ENCODE measurements at regions of chr5 and their contacts with region 1.

Region 1: GRCh38 chr5:78537821-78538220 is 110.8 kb downstream of the LHFPL2 start:
- DNase-seq: peak; percentile 61
- H3K4me3 ChIP-seq: no peak overlapping the region
- H3K27ac ChIP-seq: no peak overlapping the region
- H3K4me1 ChIP-seq: peaks cover 3% of the 10 kb centered on the region
- H3K27me3 ChIP-seq: no peaks in the 10 kb centered on the region
- CTCF ChIP-seq: peak; percentile 38
- POLR2A ChIP-seq: no peak

Region 2: GRCh38 chr5:78483809-78484521 is 53.9 kb before region 1 on chr5:
- CTCF ChIA-PET with region 1: interaction called, 18 read pairs
- POLR2A ChIA-PET with region 1: no interaction called
- dilution Hi-C with region 1: no loop called
- intact Hi-C with region 1: no loop called
- DNase-seq: peak; percentile 80
- H3K4me3 ChIP-seq: no peak overlapping the region
- H3K27ac ChIP-seq: no peak overlapping the region
- H3K4me1 ChIP-seq: peaks cover 14% of the 10 kb centered on the region
- H3K27me3 ChIP-seq: no peaks in the 10 kb centered on the region
- CTCF ChIP-seq: no peak
- POLR2A ChIP-seq: no peak

Region 3: DNA sequence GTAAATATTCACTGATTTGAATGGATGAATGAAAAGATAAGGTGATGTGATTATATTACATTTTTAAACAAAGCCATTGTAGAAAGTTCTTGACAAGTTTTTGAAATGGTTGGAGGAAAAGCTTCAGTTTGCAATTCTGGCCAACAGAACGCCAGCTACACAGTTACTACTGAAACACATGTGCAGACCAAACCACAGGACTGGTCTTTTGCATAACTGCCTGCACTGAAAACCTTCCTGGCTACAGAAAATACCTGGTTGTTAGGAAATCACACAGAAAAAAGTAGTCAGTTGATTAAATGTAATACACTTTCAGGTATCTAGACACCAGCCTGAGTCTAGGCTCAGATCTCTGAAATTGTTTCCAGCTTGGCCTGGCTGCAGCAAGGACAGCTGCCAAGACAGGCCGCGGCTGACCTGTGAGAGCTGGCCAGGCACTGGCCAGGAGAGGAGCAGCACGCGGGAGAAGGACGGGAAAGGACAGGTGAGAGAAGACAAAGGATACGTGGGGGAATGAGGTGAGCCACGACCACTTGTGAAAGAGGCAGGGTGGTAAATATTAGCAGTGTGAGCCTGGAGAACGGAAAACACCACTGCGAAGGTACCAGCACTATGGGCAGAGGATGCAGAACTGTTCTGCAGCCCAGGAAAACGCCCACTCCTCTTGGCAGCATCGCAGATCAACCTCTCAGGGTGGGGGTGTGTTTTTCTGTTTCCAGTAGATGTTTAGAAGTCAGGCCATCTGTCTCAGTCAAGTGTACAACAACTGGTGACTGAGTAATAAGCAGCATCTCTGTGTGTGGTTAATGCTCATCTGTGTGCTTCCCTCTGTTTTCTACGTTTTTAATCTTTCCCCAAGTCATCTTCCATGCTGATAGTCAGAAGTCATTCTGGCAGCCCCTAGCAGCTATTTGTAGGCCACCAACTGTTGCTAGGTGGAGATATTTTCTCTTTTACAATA is 40.0 kb before region 1 on chr5:
- CTCF ChIA-PET with region 1: interaction called, 16 read pairs
- POLR2A ChIA-PET with region 1: no interaction called
- dilution Hi-C with region 1: no loop called
- intact Hi-C with region 1: no loop called
- DNase-seq: no peak
- H3K4me3 ChIP-seq: no peak overlapping the region
- H3K27ac ChIP-seq: no peak overlapping the region
- H3K4me1 ChIP-seq: peaks cover 16% of the 10 kb centered on the region
- H3K27me3 ChIP-seq: no peaks in the 10 kb centered on the region
- CTCF ChIP-seq: no peak
- POLR2A ChIP-seq: no peak

Region 4: GRCh38 chr5:78509884-78510769 is 27.7 kb before region 1 on chr5:
- CTCF ChIA-PET with region 1: interaction called, 26 read pairs
- POLR2A ChIA-PET with region 1: no interaction called
- dilution Hi-C with region 1: no loop called
- intact Hi-C with region 1: no loop called
- DNase-seq: peak; percentile 60
- H3K4me3 ChIP-seq: peak overlapping the region in 2 of 3 experiments; percentile 2 to 7
- H3K27ac ChIP-seq: no peak overlapping the region
- H3K4me1 ChIP-seq: peaks cover 14% of the 10 kb centered on the region
- H3K27me3 ChIP-seq: no peaks in the 10 kb centered on the region
- CTCF ChIP-seq: peak in 1 of 2 donors; percentile 13
- POLR2A ChIP-seq: no peak

Region 5: GRCh38 chr5:78627175-78627574 is 89.4 kb after region 1 on chr5:
- CTCF ChIA-PET with region 1: interaction called, 6 read pairs
- POLR2A ChIA-PET with region 1: no interaction called
- dilution Hi-C with region 1: no loop called
- intact Hi-C with region 1: loop called (anchors 1 kb)
- DNase-seq: peak; percentile 44
- H3K4me3 ChIP-seq: no peak overlapping the region
- H3K27ac ChIP-seq: no peak overlapping the region
- H3K4me1 ChIP-seq: no peaks in the 10 kb centered on the region
- H3K27me3 ChIP-seq: no peaks in the 10 kb centered on the region
- CTCF ChIP-seq: peak; percentile 27 to 54
- POLR2A ChIP-seq: no peak

Region 6: DNA sequence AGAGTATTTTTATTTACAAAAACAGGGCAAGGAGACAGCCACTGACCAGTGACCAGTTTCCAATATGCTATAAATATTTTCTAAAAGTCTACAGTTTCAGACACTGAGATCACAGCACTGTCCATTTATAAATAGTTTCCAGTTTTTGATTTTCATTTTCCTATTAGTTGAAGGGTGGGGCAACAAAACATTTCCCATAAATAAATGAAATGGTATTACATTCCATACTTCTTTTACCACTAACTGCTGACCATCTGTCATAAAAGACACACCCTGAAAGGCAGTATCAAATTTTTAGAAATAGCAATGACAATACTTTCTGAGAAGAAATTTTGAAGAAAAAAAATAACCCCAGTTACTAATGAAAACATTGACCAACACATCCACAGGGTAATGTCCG is 320.5 kb after region 1 on chr5:
- CTCF ChIA-PET with region 1: no interaction called
- POLR2A ChIA-PET with region 1: no interaction called
- dilution Hi-C with region 1: no loop called
- intact Hi-C with region 1: no loop called
- DNase-seq: no peak
- H3K4me3 ChIP-seq: no peak overlapping the region
- H3K27ac ChIP-seq: no peak overlapping the region
- H3K4me1 ChIP-seq: no peaks in the 10 kb centered on the region
- H3K27me3 ChIP-seq: no peaks in the 10 kb centered on the region
- CTCF ChIP-seq: no peak
- POLR2A ChIP-seq: no peak

Region 7: DNA sequence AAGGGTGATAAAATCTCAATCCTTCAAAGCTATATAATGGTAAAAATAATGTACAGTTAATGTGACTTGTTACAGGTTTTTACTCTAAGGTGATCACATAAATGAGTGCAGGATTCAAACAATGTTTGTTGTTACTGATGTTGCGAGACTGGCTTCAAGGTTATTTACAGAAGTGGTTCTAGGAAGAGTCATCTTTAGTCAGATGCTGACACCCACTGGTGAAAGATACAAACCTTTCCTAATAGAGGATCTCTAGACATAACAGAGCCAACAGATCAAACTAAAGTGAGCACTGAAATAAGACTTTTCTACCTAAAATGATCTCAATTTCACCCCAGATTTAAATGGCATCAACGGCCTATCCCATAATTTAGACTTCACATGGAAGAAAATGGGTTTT is 427.1 kb after region 1 on chr5:
- CTCF ChIA-PET with region 1: interaction called, 5 read pairs
- POLR2A ChIA-PET with region 1: no interaction called
- dilution Hi-C with region 1: no loop called
- intact Hi-C with region 1: loop called (anchors 10 kb)
- DNase-seq: peak; percentile 79
- H3K4me3 ChIP-seq: no peak overlapping the region
- H3K27ac ChIP-seq: no peak overlapping the region
- H3K4me1 ChIP-seq: no peaks in the 10 kb centered on the region
- H3K27me3 ChIP-seq: no peaks in the 10 kb centered on the region
- CTCF ChIP-seq: peak in 1 of 2 donors; percentile 18
- POLR2A ChIP-seq: no peak